ENCODE measurements at regions of chr1 and their contacts with region 1.

Region 1: DNA sequence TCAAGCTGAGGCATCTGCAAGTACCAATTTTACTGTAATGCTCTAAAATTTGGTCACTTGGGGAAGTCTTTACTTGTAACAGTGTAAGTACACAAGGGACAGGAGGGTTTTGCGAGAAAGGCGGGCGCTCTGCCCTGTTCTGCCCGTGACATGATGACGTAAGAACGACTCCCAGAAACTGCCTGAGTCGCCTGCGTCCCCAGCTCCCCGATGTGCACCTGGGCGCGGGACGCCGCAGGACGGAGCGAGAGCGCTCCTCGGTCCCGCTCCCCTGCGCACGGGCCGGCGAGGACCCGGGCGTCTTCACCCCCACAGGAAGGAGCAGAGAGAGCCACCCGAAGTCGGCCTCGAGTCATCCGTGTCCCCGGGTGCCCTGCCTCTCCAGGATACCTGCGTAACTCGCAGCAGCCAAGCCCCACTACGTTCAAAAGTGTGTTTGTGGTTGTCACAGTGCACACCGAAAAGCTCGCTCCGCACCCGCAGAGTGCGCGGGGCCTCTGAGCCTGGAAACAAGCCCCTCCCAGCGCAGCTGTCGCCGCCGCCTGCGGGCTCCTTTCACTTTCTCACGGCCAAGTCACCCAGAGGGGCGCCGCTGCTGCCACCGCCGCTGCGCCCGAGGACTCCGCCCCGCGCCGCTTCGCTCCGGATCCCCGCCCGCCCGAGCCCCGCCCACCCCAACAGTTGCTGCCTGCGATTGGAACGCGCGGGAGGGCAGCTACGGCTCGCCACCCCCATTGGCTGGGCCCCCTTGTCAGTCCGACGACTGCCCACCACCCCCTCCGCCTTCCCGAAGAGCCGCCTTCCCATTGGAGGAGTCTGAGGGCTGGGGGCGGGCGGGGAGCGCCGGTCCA is 3.2 kb upstream of the ZBTB18 start:
- DNase-seq: peak; percentile 92
- ATAC-seq: peak; percentile 92
- H3K4me3 ChIP-seq: peak overlapping the region; percentile 75
- H3K27ac ChIP-seq: peak overlapping the region; percentile 67
- H3K4me1 ChIP-seq: peaks cover 20% of the 10 kb centered on the region
- H3K27me3 ChIP-seq: no peaks in the 10 kb centered on the region; a peak in 1 of 4 replicates
- CTCF ChIP-seq: no peak
- EP300 ChIP-seq: peak in 1 of 2 experiments; percentile 32; a peak in 1 of 4 replicates
- POLR2A ChIP-seq: peak; percentile 91
- RAD21 ChIP-seq: no peak

Region 2: GRCh38 chr1:244010191-244010590 is 37.7 kb before region 1 on chr1:
- CTCF ChIA-PET with region 1: no interaction called
- POLR2A ChIA-PET with region 1: no interaction called
- RAD21 ChIA-PET with region 1: no interaction called
- SMC1A ChIA-PET with region 1: no interaction called
- in situ Hi-C with region 1: no loop called
- intact Hi-C with region 1: no loop called
- DNase-seq: no peak
- ATAC-seq: peak; percentile 36
- H3K4me3 ChIP-seq: no peak overlapping the region
- H3K27ac ChIP-seq: no peak overlapping the region
- H3K4me1 ChIP-seq: no peaks in the 10 kb centered on the region
- H3K27me3 ChIP-seq: peaks cover 0 to 4% of the 10 kb centered on the region in 2 experiments; a peak in 1 of 4 replicates
- CTCF ChIP-seq: no peak
- EP300 ChIP-seq: no peak
- POLR2A ChIP-seq: no peak
- RAD21 ChIP-seq: no peak

Region 3: DNA sequence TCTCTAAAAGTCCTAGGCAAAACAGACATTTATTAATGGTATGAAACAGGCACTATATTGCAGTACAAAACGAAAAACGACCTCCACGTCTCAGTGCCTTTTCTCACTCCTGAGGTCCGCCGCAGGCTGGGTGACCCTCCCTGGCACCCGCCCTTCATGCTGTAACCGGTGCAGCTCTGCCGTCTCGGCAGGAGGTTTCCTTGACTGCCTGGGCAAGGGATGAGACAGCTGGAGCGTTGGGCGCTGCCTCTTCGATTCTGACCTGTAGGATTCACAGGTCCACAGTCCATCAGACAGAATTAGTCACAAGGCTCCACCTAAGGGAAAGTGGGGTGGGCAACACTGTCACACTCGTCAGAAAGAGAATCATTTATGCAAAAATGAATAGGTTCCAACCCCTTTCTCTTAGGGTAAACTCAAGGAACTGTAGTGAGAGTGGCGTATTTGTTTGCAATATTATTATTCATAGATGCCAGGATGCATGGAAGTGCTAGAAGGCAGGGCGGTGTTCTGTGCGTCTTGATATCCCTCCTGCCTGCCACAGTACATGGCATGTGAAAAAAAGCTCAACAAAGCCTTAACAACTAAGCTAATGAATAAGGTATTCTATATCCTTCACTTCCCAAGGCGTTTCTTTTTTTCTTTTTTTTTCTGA is 20.2 kb before region 1 on chr1:
- CTCF ChIA-PET with region 1: no interaction called
- POLR2A ChIA-PET with region 1: no interaction called
- RAD21 ChIA-PET with region 1: no interaction called
- SMC1A ChIA-PET with region 1: no interaction called
- in situ Hi-C with region 1: no loop called
- intact Hi-C with region 1: no loop called
- DNase-seq: no peak
- ATAC-seq: no peak
- H3K4me3 ChIP-seq: no peak overlapping the region
- H3K27ac ChIP-seq: no peak overlapping the region
- H3K4me1 ChIP-seq: no peaks in the 10 kb centered on the region
- H3K27me3 ChIP-seq: no peaks in the 10 kb centered on the region; a peak in 1 of 4 replicates
- CTCF ChIP-seq: no peak
- EP300 ChIP-seq: no peak
- POLR2A ChIP-seq: no peak
- RAD21 ChIP-seq: no peak

Region 4: GRCh38 chr1:244060686-244061085 is 12.8 kb after region 1 on chr1:
- CTCF ChIA-PET with region 1: interaction called, 5 read pairs
- POLR2A ChIA-PET with region 1: interaction called, 11 read pairs
- RAD21 ChIA-PET with region 1: interaction called, 15 read pairs
- SMC1A ChIA-PET with region 1: interaction called, 45 read pairs
- in situ Hi-C with region 1: no loop called
- intact Hi-C with region 1: no loop called
- DNase-seq: no peak
- ATAC-seq: peak; percentile 74
- H3K4me3 ChIP-seq: no peak overlapping the region
- H3K27ac ChIP-seq: no peak overlapping the region
- H3K4me1 ChIP-seq: no peaks in the 10 kb centered on the region
- H3K27me3 ChIP-seq: no peaks in the 10 kb centered on the region
- CTCF ChIP-seq: no peak
- EP300 ChIP-seq: 0 out of 4 replicates have a peak, but pooled peaks of 1 of the 2 experiments have one; percentile 12
- POLR2A ChIP-seq: no peak
- RAD21 ChIP-seq: no peak

Region 5: GRCh38 chr1:244074559-244075171 is 26.8 kb after region 1 on chr1:
- CTCF ChIA-PET with region 1: interaction called, 4 read pairs
- POLR2A ChIA-PET with region 1: interaction called, 3 read pairs
- RAD21 ChIA-PET with region 1: interaction called, 10 read pairs
- SMC1A ChIA-PET with region 1: interaction called, 6 read pairs
- in situ Hi-C with region 1: no loop called
- intact Hi-C with region 1: no loop called
- DNase-seq: no peak
- ATAC-seq: peak; percentile 78
- H3K4me3 ChIP-seq: peak overlapping the region; percentile 28
- H3K27ac ChIP-seq: no peak overlapping the region
- H3K4me1 ChIP-seq: peaks cover 14% of the 10 kb centered on the region
- H3K27me3 ChIP-seq: peaks cover 0 to 2% of the 10 kb centered on the region in 2 experiments; a peak in 2 of 4 replicates
- CTCF ChIP-seq: no peak
- EP300 ChIP-seq: 0 out of 4 replicates have a peak, but pooled peaks of 1 of the 2 experiments have one; percentile 7
- POLR2A ChIP-seq: no peak
- RAD21 ChIP-seq: 0 out of 2 replicates have a peak, but pooled peaks have one; percentile 7

Region 6: GRCh38 chr1:244296447-244296846 is 248.6 kb after region 1 on chr1:
- CTCF ChIA-PET with region 1: interaction called, 3 read pairs
- POLR2A ChIA-PET with region 1: no interaction called
- RAD21 ChIA-PET with region 1: no interaction called
- SMC1A ChIA-PET with region 1: interaction called, 3 read pairs
- in situ Hi-C with region 1: no loop called
- intact Hi-C with region 1: loop called (anchors 5 kb)
- DNase-seq: no peak
- ATAC-seq: no peak
- H3K4me3 ChIP-seq: no peak overlapping the region
- H3K27ac ChIP-seq: no peak overlapping the region
- H3K4me1 ChIP-seq: peaks cover 3% of the 10 kb centered on the region
- H3K27me3 ChIP-seq: no peaks in the 10 kb centered on the region
- CTCF ChIP-seq: no peak
- EP300 ChIP-seq: no peak
- POLR2A ChIP-seq: no peak
- RAD21 ChIP-seq: no peak

Measured in GM12878 (cell line).